Cardiac septum (tissue), 1 donor: ENCODE measurements at regions of chr19 and their contacts with region 1.

Region 1: GRCh38 chr19:1605236-1606137 is at the start of gene UQCR11:
- DNase-seq: peak; percentile 98
- total RNA-seq, gene UQCR11: 697 TPM

Region 2: DNA sequence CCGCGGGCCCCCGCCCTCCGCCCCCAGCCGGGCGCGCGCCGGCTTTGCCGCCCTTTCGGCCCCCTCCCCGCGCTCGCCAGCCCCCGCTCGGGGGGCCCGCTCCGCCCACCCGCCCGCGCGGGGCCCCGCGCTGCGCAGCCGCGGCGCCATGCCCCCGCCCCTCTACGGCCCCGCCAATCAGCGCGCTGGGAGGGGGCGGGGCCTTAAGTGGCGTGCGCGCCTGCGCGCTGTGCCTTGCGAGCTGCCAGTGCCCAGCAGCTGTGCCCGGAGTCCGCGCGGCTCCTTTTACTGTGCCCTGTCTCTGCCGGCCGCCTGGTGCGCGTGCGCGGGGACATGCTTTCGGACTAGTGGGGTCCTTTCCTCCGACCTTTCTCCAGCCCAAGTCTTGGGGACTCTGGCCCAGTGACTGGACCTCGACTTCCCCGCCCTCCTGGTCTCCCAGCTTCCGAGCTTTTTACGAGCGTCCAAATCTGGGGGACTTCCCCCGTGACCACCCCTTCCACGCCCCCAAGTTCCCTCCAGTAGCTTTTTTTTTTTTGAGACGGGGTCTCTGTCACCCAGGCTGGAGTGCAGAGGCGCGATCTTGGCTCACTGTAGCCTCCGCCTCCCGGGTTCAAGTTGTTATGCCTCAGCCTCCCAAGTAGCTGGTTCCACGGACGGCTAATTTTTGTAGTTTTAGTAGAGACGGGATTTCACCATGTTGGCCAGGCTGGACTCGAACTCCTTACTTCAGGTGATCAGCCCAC is 12.6 kb before region 1 on chr19 and contains the start of gene MBD3:
- intact Hi-C with region 1: loop called (anchors 1 kb)
- DNase-seq: peak; percentile 95
- total RNA-seq, gene MBD3: 61.8 TPM

Region 3: GRCh38 chr19:1652471-1653299 is 47.2 kb after region 1 on chr19 and contains the start of gene TCF3:
- intact Hi-C with region 1: loop called (anchors 1 kb)
- DNase-seq: peak; percentile 98
- total RNA-seq, gene TCF3: 27.7 TPM

Region 4: GRCh38 chr19:1672038-1672768 is 66.7 kb after region 1 on chr19:
- intact Hi-C with region 1: loop called (anchors 5 kb)
- DNase-seq: no peak

Region 5: GRCh38 chr19:1767464-1767933 is 162.0 kb after region 1 on chr19:
- intact Hi-C with region 1: loop called (anchors 5 kb)
- DNase-seq: no peak